ENCODE measurements at regions of chr12 and their contacts with region 1.

Region 1: GRCh38 chr12:6434205-6435140 is 10.3 kb upstream of the CD27 start:
- DNase-seq: peak; percentile 68
- ATAC-seq: peak; percentile 85
- H3K4me3 Mint-ChIP-seq: peak overlapping the region; percentile 58
- H3K27ac Mint-ChIP-seq: peak overlapping the region; percentile 86
- H3K4me1 Mint-ChIP-seq: peaks cover 49% of the 10 kb centered on the region
- H3K27me3 Mint-ChIP-seq: no peaks in the 10 kb centered on the region

Region 2: DNA sequence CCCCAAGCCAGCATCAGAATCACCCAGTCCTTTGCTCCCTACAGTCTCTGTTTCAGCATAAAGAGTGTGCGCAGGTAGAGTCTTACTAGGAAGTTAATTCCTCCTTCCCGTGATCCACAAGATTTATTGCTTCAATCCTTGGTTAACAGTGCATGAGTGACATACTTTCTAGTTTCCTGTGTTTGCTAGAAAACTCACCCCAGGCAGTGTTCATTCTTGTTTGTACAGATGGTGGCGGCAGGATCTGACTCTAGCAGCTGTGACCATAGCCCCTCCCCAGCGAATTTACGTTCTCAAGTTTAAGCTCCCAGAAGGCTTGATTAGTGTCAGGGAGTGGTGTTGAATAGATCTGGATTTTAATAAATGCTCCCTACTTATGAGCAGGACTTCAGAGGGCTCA is 413.5 kb before region 1 on chr12:
- CTCF ChIA-PET with region 1: no interaction called
- DNase-seq: no peak
- ATAC-seq: no peak
- H3K4me3 Mint-ChIP-seq: no peak overlapping the region
- H3K27ac Mint-ChIP-seq: no peak overlapping the region
- H3K4me1 Mint-ChIP-seq: no peaks in the 10 kb centered on the region
- H3K27me3 Mint-ChIP-seq: peaks cover 14% of the 10 kb centered on the region

Region 3: DNA sequence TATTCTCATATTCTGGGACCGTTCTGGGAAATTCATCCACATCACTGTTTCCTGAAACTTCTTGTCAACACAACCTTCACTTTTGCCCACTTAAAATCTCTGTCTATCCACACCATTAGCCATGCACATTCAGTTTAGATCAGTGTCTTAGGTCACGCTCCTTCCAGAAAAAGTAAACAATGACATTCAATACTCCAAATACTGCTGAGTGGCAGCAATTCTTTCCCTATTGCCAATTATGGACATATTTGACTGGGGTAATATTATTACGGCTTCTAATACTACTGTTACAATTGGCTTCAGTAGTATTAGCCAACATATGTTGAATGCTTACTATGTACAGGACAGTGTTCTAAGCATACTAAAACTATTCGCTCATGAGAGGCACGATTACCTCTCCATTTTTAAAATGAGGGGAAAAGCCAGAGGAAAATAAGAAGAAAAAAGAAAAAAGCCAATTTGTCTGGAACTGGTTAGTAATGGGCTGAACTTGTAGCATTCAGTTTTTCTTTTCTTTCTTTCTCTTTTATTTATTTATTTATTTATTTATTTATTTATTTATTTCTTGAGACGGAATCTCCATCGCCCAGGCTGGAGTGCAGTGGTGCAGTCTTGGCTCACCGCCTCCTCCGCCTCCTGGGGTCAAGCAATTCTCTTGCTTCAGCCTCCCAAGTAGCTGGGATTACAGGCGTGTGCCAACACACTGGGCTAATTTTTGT is 27.1 kb before region 1 on chr12:
- CTCF ChIA-PET with region 1: no interaction called
- DNase-seq: no peak
- ATAC-seq: no peak
- H3K4me3 Mint-ChIP-seq: no peak overlapping the region
- H3K27ac Mint-ChIP-seq: no peak overlapping the region
- H3K4me1 Mint-ChIP-seq: peaks cover 5% of the 10 kb centered on the region
- H3K27me3 Mint-ChIP-seq: peaks cover 24% of the 10 kb centered on the region

Region 4: GRCh38 chr12:6451348-6452244 is 17.1 kb after region 1 on chr12 and contains the start of gene TAPBPL:
- CTCF ChIA-PET with region 1: interaction called, 43 read pairs
- DNase-seq: peak; percentile 90
- ATAC-seq: peak; percentile 84
- H3K4me3 Mint-ChIP-seq: peak within 1 kb of the TSS; percentile 97
- H3K27ac Mint-ChIP-seq: peak within 1 kb of the TSS; percentile 94
- H3K4me1 Mint-ChIP-seq: peaks cover 59% of the 10 kb centered on the region
- H3K27me3 Mint-ChIP-seq: no peaks in the 10 kb centered on the region
- total RNA-seq, gene TAPBPL: 49.1 to 53.0 TPM

Region 5: DNA sequence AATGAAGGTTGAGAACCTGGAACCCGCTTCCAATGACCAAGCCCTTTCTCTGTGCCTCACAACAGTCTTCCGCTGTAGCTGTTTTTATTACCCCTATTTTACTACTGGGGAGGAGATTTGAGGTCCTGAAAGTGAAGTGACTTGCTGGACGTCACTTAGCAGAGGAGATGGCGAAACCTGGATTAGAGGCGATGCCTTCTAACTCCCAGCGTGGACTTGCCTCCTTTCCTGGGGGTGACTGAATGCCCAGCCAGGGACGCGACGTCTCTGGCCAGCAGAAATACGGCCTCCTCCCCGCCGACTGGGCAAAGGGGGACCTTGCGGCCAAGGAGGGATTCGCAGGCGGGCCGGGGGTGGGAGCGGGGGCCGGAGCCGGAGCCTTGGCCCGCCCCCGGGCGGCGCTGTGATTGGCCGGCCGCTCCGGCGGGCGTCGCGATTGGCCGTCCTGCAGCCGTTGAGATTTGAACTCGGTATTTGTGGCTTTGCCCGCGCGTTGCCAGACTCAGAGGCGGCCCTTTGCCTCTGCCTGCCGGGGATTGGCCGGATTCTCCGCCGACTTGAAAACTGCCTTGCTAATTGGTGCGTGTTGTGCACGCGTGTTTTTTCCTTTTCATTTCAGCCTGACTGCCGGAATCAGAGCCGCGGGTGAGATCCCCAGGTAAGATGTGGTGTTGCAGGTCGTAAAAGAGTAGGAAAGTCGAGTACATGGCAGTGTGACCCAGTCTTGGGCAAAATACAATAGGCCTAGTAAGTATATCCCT is 59.2 kb after region 1 on chr12 and contains the start of gene NCAPD2:
- CTCF ChIA-PET with region 1: no interaction called
- DNase-seq: peak; percentile 99
- ATAC-seq: peak; percentile 87
- H3K4me3 Mint-ChIP-seq: peak within 1 kb of the TSS; percentile 91
- H3K27ac Mint-ChIP-seq: peak within 1 kb of the TSS; percentile 95
- H3K4me1 Mint-ChIP-seq: peaks cover 43% of the 10 kb centered on the region
- H3K27me3 Mint-ChIP-seq: no peaks in the 10 kb centered on the region
- total RNA-seq, gene NCAPD2: 173 to 200 TPM

Region 6: GRCh38 chr12:6965026-6965661 is 530.7 kb after region 1 on chr12:
- CTCF ChIA-PET with region 1: no interaction called
- DNase-seq: peak; percentile 91
- ATAC-seq: peak; percentile 58
- H3K4me3 Mint-ChIP-seq: no peak overlapping the region
- H3K27ac Mint-ChIP-seq: peak overlapping the region; percentile 82
- H3K4me1 Mint-ChIP-seq: peaks cover 61% of the 10 kb centered on the region
- H3K27me3 Mint-ChIP-seq: no peaks in the 10 kb centered on the region

Measured in activated CD8-positive, alpha-beta memory T cell treated with anti-CD3 and anti-CD28 coated beads, Interleukin-2, amount 10 ng/mL, durations not matched to agents 7 days and 5 days (primary cell).